Posterior vena cava (tissue), 2 donors: ENCODE measurements at regions of chr7 and their contacts with region 1.

Region 1: GRCh38 chr7:50467817-50468610 is 17.9 kb upstream of the FIGNL1 start:
- DNase-seq: peak; percentile 95

Region 2: GRCh38 chr7:50595491-50596102 is 127.6 kb after region 1 on chr7:
- intact Hi-C with region 1: loop called in 1 of 2 experiments (anchors 10 kb)
- DNase-seq: no peak

Region 3: DNA sequence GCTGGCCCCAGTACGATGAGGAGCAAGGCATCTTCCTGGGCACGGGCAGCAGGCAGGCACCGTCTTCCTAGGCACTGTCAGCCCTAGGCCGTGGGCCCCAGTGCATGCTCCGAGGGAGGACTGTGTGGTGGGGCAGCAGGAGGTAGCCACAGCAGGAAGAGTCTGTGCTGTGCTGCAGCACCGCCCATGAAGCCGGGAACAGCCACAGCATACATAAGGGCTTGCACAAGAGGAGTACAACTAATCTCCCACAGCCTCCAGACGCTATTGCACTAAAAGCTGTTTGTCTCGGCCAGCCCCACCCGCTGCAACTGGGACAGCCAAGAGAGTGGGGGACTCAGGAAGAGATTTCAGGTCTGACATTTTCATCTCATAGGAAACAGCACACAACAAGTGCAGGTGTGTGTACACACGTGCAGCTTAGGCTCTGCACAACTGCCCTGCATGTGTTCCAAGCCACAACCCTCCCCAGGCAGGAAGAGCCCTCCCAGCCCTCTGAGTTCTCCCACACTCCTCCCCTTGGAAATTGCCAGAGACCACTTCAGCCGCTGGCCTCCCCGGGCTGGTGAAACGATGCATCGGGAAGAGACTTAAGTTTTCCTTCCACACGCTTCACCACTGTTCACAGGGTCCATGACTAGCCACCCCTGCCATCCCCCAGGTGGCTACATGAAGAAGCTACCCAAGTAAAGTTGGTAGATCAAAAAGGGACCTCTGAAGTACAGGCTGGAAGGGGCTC is 185.3 kb after region 1 on chr7:
- intact Hi-C with region 1: no loop called
- DNase-seq: peak; percentile 90

Region 4: GRCh38 chr7:50679218-50680007 is 211.4 kb after region 1 on chr7:
- intact Hi-C with region 1: loop called (anchors 5 to 10 kb)
- DNase-seq: no peak

Region 5: GRCh38 chr7:50872437-50872836 is 404.4 kb after region 1 on chr7:
- intact Hi-C with region 1: loop called in 1 of 2 experiments (anchors 5 kb)
- DNase-seq: no peak

Region 6: GRCh38 chr7:51102828-51103227 is 634.8 kb after region 1 on chr7:
- intact Hi-C with region 1: no loop called
- DNase-seq: no peak

Region 7: GRCh38 chr7:51154201-51154600 is 686.2 kb after region 1 on chr7:
- intact Hi-C with region 1: loop called in 1 of 2 experiments (anchors 10 kb)
- DNase-seq: no peak